HCT116 (cell line): ENCODE measurements at regions of chr7 and their contacts with region 1.

Region 1: DNA sequence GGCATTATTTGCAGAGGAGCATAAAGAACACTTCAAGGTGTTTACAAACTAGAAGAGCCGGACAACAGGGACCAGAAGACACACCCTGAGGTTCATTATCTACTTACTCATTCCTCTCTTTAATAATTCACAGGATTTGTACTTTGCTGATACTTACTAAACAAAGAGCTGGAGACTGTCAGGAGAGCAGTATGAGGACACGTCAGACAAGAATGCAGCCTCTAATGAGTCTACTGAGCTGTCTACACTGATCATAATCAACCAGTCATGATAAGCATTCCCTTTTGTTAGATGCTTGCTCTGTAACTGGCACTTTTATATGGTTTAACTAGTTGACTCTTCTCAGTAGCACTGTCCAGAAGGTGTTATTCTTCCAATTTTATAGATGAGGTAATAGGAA is 243.3 kb upstream of the CDC14C start:
- DNase-seq: no peak
- ATAC-seq: no peak
- H3K4me3 ChIP-seq: no peak overlapping the region
- H3K27ac ChIP-seq: no peak overlapping the region
- H3K4me1 ChIP-seq: no peaks in the 10 kb centered on the region
- H3K27me3 ChIP-seq: no peaks in the 10 kb centered on the region
- CTCF ChIP-seq: no peak
- POLR2A ChIP-seq: no peak
- RAD21 ChIP-seq: no peak

Region 2: DNA sequence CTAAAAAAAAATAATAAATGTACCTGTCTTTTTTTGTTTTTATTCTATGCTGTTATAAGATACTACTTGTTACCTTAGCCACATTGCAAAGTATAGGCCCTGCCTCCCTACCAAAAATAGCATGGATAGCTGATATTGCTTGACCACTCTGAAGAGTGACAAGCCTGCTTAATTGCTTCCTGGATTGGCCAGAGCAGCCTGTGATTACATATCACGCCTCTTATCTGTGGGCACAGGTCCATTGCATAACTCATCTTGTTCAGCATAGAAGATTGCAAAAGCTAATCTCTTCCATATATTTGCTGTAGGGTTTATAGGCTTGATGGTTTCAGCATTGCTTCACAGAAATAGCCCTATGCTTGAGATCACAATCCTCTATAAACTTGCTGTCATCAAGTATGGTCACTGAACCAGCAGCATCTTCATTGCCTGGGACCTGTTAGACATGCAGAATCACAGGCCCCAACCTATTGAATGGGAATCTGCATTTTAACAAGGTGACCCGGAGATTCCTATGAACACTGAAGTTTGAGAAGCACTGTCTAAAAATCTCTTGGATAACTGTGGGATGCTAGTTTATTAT is 37.5 kb before region 1 on chr7:
- CTCF ChIA-PET with region 1: no interaction called
- POLR2A ChIA-PET with region 1: no interaction called
- RAD21 ChIA-PET with region 1: no interaction called
- intact Hi-C with region 1: loop called (anchors 5 kb)
- DNase-seq: no peak
- ATAC-seq: no peak
- H3K4me3 ChIP-seq: no peak overlapping the region
- H3K27ac ChIP-seq: no peak overlapping the region
- H3K4me1 ChIP-seq: no peaks in the 10 kb centered on the region
- H3K27me3 ChIP-seq: no peaks in the 10 kb centered on the region
- CTCF ChIP-seq: no peak
- POLR2A ChIP-seq: no peak
- RAD21 ChIP-seq: no peak

Region 3: GRCh38 chr7:48660306-48660870 is 20.6 kb before region 1 on chr7:
- CTCF ChIA-PET with region 1: no interaction called
- POLR2A ChIA-PET with region 1: no interaction called
- RAD21 ChIA-PET with region 1: no interaction called
- intact Hi-C with region 1: no loop called
- DNase-seq: no peak
- ATAC-seq: no peak
- H3K4me3 ChIP-seq: no peak overlapping the region
- H3K27ac ChIP-seq: no peak overlapping the region
- H3K4me1 ChIP-seq: no peaks in the 10 kb centered on the region
- H3K27me3 ChIP-seq: no peaks in the 10 kb centered on the region
- CTCF ChIP-seq: no peak
- POLR2A ChIP-seq: no peak
- RAD21 ChIP-seq: no peak

Region 4: DNA sequence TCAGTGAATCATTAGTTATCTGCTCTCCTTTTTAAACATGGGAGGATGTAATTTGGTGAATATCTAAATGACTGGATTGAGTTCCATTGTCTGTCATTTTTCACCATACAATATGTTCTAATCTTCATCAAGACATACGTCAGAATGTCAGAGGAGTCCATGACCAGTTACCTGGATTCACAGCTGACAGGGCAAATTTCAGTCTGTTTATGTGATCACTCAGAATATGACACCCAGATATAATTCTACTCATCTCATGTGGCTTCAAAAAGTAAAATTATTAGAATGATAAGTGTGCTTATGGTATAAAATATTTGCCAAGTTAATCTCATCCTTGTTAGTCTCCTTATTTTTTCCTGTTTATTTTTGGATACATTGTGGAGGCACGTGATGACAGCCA is 393.5 kb after region 1 on chr7:
- CTCF ChIA-PET with region 1: no interaction called
- POLR2A ChIA-PET with region 1: no interaction called
- RAD21 ChIA-PET with region 1: no interaction called
- intact Hi-C with region 1: no loop called
- DNase-seq: no peak
- ATAC-seq: no peak
- H3K4me3 ChIP-seq: no peak overlapping the region
- H3K27ac ChIP-seq: no peak overlapping the region
- H3K4me1 ChIP-seq: no peaks in the 10 kb centered on the region
- H3K27me3 ChIP-seq: no peaks in the 10 kb centered on the region
- CTCF ChIP-seq: no peak
- POLR2A ChIP-seq: no peak
- RAD21 ChIP-seq: no peak